HEK293T (cell line): ENCODE measurements at regions of chr6 and their contacts with region 1.

Region 1: DNA sequence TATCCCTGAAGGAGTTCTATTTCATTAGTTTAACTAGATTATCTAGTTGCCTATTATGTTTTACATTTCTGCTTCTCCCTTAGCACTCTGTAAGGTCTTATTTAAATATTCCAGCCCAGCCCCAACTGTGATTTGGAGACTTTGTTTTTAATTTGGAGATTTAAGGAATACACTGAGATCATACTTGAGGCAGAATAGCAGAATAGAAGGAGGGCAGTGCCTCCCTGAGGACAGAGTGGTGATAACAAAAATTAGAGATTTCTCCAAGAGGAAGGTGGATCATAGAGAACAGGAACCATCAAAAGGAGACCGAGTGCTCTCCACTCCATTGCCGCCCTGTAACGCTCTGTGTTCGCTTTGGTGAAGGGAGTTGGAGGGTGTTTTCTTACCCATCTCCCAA is 14.8 kb upstream of the CD164 start:
- DNase-seq: peak; percentile 20

Region 2: GRCh38 chr6:109187399-109188114 is 209.5 kb before region 1 on chr6:
- CTCF ChIA-PET with region 1: interaction called, 13 read pairs
- POLR2A ChIA-PET with region 1: no interaction called
- DNase-seq: peak; percentile 48

Region 3: DNA sequence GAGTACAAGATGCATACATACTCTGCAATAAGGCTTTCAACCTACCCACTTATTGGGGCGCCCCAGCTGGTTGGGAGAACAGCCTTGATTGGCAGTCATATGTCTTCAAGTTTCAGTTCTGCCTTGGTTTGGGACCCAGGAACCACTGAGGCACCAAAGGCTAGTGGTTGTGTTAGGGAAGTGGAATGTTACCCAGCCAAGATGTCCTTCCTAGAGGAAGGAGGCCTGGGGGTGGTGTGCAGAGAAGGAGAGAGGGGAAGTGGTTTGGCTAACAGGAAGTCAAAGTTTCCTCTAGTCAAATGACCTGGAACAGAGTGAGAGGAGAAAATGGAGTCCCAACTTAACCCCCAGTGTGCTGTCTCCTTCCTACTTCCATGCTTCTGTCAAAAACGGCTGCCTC is 74.2 kb before region 1 on chr6:
- CTCF ChIA-PET with region 1: no interaction called
- POLR2A ChIA-PET with region 1: no interaction called
- DNase-seq: no peak